B cell (primary cell): ENCODE measurements at regions of chr10 and their contacts with region 1.

Region 1: GRCh38 chr10:119859420-119860258 is 13.0 kb downstream of the MCMBP start:
- DNase-seq: peak; percentile 71
- ATAC-seq: peak; percentile 58
- H3K4me3 ChIP-seq: no peak overlapping the region
- H3K4me3 Mint-ChIP-seq: no peak overlapping the region
- H3K27ac ChIP-seq: peak overlapping the region in 1 of 2 donors; percentile 47
- H3K27ac Mint-ChIP-seq: no peak overlapping the region
- H3K4me1 ChIP-seq: peaks cover 3 to 7% of the 10 kb centered on the region in 2 donors
- H3K4me1 Mint-ChIP-seq: peaks cover 26% of the 10 kb centered on the region
- H3K27me3 ChIP-seq: no peaks in the 10 kb centered on the region
- H3K27me3 Mint-ChIP-seq: no peaks in the 10 kb centered on the region
- CTCF ChIP-seq: peak; percentile 83

Region 2: DNA sequence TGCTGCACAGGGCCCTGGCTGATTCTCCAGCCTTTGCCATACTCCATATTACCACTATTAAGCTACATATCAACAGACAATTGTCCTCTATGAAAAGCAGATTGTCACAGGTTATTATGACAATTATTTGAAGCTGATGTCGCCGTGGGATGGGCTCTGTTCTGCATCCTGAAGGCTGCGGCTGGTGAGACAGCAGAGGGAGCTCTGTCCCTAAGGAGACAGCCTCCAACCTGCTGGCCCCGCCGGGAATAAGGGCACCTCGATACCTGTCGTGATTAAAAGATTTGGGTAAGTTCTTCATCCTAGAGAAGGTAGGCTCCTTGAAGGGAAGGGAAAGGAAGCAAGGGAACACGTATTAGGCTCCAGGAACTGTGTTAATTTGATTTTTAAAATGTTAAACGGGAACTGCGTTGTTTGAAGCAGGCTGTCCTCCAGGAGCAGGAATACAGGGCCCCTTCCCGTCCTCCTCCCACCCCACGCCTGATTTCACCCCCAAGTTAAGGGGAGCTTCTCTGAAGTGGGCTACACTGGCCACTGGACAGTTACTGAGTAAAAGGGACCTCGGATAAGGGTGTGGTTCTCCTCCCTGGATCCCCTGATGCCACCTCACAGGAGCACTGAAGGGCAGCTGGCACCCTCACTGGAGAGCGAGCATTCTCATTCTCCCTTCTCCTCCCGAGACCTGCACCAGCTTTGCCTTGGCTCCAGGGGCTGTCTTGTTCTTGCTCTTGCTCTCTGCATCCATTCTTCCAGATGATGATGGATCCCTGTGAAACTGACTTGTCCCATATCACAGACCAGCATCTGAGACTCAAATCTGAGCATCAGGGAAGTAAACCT is 251.1 kb before region 1 on chr10:
- CTCF ChIA-PET with region 1: interaction called, 13 read pairs
- POLR2A ChIA-PET with region 1: no interaction called
- intact Hi-C with region 1: loop called (anchors 2 kb)
- DNase-seq: peak; percentile 36
- ATAC-seq: no peak
- H3K4me3 ChIP-seq: no peak overlapping the region
- H3K4me3 Mint-ChIP-seq: no peak overlapping the region
- H3K27ac ChIP-seq: no peak overlapping the region
- H3K27ac Mint-ChIP-seq: no peak overlapping the region
- H3K4me1 ChIP-seq: peaks cover 0 to 5% of the 10 kb centered on the region in 2 donors
- H3K4me1 Mint-ChIP-seq: peaks cover 6% of the 10 kb centered on the region
- H3K27me3 ChIP-seq: no peaks in the 10 kb centered on the region
- H3K27me3 Mint-ChIP-seq: peaks cover 9% of the 10 kb centered on the region
- CTCF ChIP-seq: no peak

Region 3: DNA sequence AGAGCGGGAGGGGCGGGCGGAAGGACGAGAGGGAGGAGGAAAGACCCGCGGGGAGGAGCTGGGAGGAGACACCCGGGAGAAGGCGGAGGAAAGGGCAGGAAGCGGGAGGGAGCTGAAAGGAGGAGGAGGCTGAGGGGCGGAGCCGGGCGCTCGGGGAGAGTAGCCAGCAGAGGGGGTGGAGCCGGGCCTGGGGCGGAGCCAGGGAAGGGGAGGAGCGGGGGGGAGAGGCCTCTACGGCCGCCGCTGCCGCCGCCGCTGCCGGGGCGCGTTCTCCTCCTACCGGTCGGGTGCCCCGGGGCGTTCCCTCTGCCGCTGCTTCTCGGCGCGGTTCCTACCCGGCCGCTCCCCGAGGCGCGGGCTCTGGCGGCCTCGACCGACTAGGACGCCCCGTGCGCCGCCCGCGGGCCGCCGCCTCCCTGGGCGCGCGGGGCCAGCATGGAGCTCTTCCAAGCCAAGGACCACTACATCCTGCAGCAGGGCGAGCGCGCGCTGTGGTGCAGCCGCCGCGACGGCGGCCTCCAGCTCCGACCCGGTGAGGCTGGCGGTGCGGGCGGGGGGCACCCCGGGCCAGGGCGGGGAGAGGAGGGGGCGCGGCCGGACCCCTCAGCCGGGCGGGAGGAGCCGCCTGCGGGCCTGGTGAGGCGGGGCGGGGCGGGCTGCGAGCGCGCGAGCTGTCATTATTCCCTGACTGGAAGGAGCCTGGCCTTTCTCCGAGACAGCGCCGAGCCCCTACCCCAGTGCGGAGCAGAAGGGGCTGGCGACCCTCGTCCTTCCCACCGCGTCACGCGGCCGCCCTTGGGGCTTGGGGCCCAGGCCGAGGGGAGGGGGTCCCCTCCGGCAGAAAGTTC is 133.6 kb before region 1 on chr10 and contains the start of gene INPP5F:
- CTCF ChIA-PET with region 1: interaction called, 15 read pairs
- POLR2A ChIA-PET with region 1: no interaction called
- intact Hi-C with region 1: no loop called
- DNase-seq: peak; percentile 95
- ATAC-seq: peak; percentile 93
- H3K4me3 ChIP-seq: peak within 1 kb of the TSS; percentile 55 to 85 (median 70)
- H3K4me3 Mint-ChIP-seq: peak within 1 kb of the TSS; percentile 98
- H3K27ac ChIP-seq: peak within 1 kb of the TSS; percentile 73 to 90
- H3K27ac Mint-ChIP-seq: peak within 1 kb of the TSS; percentile 95
- H3K4me1 ChIP-seq: peaks cover 38 to 51% of the 10 kb centered on the region in 2 donors
- H3K4me1 Mint-ChIP-seq: peaks cover 48% of the 10 kb centered on the region
- H3K27me3 ChIP-seq: no peaks in the 10 kb centered on the region
- H3K27me3 Mint-ChIP-seq: no peaks in the 10 kb centered on the region
- CTCF ChIP-seq: peak; percentile 55
- total RNA-seq, gene INPP5F: 37.5 and 42.5 TPM in 2 replicates

Region 4: DNA sequence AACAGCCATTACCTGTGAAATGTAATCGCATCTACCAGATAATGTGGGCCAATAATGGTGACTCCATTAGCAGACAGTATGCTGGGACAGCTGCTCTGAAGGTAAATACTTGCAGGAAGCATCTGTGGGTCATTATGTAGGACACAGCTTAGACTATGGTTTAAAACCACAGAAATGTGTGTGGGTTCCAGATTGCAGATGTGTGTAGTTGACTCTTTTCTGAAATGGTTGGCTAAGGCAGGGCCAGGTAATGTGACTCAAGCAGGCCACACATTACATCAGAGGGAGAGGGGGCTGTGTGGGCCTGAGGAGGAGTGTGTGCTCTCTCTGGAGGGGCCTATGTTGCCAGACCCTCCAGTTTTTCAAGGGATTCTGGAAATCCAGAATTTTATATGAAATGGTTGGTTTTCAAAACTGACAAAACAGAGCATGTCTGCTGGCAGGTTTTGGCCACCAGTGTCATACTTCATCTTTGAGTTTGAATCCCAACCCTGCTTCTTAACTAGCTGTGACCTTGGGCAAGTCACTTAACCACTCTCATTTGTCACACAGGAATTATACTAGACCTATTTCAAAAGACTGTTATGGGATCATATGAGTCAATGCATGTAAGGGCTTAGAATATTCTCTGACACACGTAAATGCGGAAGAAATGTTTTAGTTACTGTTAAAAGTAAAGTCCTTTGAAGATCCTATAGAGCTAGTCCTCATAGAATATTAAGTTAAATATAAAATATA is 51.5 kb before region 1 on chr10:
- CTCF ChIA-PET with region 1: interaction called, 21 read pairs
- POLR2A ChIA-PET with region 1: no interaction called
- intact Hi-C with region 1: no loop called
- DNase-seq: peak; percentile 17
- ATAC-seq: peak; percentile 43
- H3K4me3 ChIP-seq: no peak overlapping the region
- H3K4me3 Mint-ChIP-seq: no peak overlapping the region
- H3K27ac ChIP-seq: no peak overlapping the region
- H3K27ac Mint-ChIP-seq: no peak overlapping the region
- H3K4me1 ChIP-seq: peaks cover 3 to 9% of the 10 kb centered on the region in 2 donors
- H3K4me1 Mint-ChIP-seq: peaks cover 18% of the 10 kb centered on the region
- H3K27me3 ChIP-seq: no peaks in the 10 kb centered on the region
- H3K27me3 Mint-ChIP-seq: no peaks in the 10 kb centered on the region
- CTCF ChIP-seq: no peak

Region 5: GRCh38 chr10:119849031-119849789 is 10.4 kb before region 1 on chr10:
- CTCF ChIA-PET with region 1: interaction called, 12 read pairs
- POLR2A ChIA-PET with region 1: no interaction called
- intact Hi-C with region 1: no loop called
- DNase-seq: no peak
- ATAC-seq: no peak
- H3K4me3 ChIP-seq: no peak overlapping the region
- H3K4me3 Mint-ChIP-seq: no peak overlapping the region
- H3K27ac ChIP-seq: no peak overlapping the region
- H3K27ac Mint-ChIP-seq: no peak overlapping the region
- H3K4me1 ChIP-seq: peaks cover 4 to 5% of the 10 kb centered on the region in 2 donors
- H3K4me1 Mint-ChIP-seq: peaks cover 10% of the 10 kb centered on the region
- H3K27me3 ChIP-seq: no peaks in the 10 kb centered on the region
- H3K27me3 Mint-ChIP-seq: no peaks in the 10 kb centered on the region
- CTCF ChIP-seq: no peak